Activated CD4-positive, alpha-beta memory T cell treated with anti-CD3 and anti-CD28 coated beads for 36 hours (primary cell): ENCODE measurements at regions of chr3 and their contacts with region 1.

Region 1: GRCh38 chr3:71050538-71051258 is 532.8 kb downstream of the FOXP1 start:
- DNase-seq: peak; percentile 61
- H3K4me3 Mint-ChIP-seq: peak overlapping the region; percentile 6
- H3K27ac Mint-ChIP-seq: peak overlapping the region; percentile 86
- H3K4me1 Mint-ChIP-seq: peaks cover 100% of the 10 kb centered on the region
- H3K27me3 Mint-ChIP-seq: no peaks in the 10 kb centered on the region

Region 2: DNA sequence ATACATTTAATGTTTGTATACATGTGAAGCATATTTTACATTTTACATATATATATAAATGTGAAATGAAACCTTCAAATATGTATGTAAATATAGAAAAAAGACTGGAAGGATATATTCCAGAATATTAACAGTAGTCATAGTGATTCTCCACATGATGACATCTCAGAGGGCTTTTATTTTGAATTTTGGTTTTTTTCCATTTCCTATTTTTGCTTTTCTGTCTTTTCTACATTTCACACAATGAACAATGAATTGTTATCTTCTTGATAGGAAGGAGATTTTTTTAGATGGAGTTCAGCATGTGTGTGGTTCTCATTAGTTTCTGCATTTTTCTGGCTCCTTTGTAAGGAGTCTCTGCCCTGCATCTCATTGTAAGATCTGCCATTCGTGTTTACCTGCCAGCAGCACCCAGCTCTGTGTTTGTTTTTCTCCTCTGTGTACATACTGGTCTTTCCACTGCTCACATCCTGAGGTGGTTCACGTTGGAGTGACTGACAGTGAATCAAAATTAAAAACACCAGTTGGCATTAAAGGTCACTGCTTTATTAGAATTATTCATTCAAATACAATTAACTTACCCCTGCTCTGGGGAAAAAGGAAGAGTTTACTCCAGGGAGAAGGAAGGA is 312.9 kb before region 1 on chr3:
- CTCF ChIA-PET with region 1: no interaction called
- POLR2A ChIA-PET with region 1: no interaction called
- intact Hi-C with region 1: no loop called
- DNase-seq: no peak
- H3K4me3 Mint-ChIP-seq: no peak overlapping the region
- H3K27ac Mint-ChIP-seq: no peak overlapping the region
- H3K4me1 Mint-ChIP-seq: no peaks in the 10 kb centered on the region
- H3K27me3 Mint-ChIP-seq: peaks cover 7% of the 10 kb centered on the region

Region 3: GRCh38 chr3:70871909-70872656 is 178.6 kb before region 1 on chr3:
- CTCF ChIA-PET with region 1: no interaction called
- POLR2A ChIA-PET with region 1: no interaction called
- intact Hi-C with region 1: no loop called
- DNase-seq: no peak
- H3K4me3 Mint-ChIP-seq: no peak overlapping the region
- H3K27ac Mint-ChIP-seq: no peak overlapping the region
- H3K4me1 Mint-ChIP-seq: no peaks in the 10 kb centered on the region
- H3K27me3 Mint-ChIP-seq: peaks cover 12% of the 10 kb centered on the region

Region 4: DNA sequence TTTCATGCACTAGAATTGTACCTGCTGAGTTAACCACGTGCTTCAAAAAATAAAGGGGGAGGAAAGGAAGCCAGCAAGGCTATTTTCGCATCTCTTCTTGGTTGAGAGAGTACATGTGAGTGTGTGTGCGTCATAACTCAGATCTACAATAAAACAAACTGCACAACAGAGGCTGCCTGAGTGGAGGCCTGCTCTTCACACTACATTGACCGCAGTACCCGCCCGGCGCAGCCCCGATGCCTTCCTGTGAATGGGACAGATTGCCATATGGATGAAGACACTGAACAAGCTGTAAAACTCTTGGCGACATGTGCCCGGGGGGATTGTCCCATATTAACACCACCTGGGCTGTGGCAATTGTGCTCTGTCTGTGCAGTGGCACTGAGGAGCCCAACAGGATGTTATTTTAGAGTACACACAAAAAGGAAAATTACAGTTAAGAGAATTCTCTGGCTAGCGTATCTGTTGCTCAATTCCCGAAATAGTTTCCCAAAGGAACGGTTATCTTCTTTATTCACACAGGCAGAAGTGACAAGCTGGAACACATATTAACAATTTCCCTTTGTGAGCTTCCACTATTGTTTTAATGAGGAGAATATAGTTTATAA is 18.7 kb before region 1 on chr3:
- CTCF ChIA-PET with region 1: no interaction called
- POLR2A ChIA-PET with region 1: no interaction called
- intact Hi-C with region 1: loop called (anchors 2 kb)
- DNase-seq: no peak
- H3K4me3 Mint-ChIP-seq: no peak overlapping the region
- H3K27ac Mint-ChIP-seq: peak overlapping the region; percentile 71
- H3K4me1 Mint-ChIP-seq: peaks cover 85% of the 10 kb centered on the region
- H3K27me3 Mint-ChIP-seq: no peaks in the 10 kb centered on the region